ENCODE measurements at regions of chr1 and their contacts with region 1.

Region 1: DNA sequence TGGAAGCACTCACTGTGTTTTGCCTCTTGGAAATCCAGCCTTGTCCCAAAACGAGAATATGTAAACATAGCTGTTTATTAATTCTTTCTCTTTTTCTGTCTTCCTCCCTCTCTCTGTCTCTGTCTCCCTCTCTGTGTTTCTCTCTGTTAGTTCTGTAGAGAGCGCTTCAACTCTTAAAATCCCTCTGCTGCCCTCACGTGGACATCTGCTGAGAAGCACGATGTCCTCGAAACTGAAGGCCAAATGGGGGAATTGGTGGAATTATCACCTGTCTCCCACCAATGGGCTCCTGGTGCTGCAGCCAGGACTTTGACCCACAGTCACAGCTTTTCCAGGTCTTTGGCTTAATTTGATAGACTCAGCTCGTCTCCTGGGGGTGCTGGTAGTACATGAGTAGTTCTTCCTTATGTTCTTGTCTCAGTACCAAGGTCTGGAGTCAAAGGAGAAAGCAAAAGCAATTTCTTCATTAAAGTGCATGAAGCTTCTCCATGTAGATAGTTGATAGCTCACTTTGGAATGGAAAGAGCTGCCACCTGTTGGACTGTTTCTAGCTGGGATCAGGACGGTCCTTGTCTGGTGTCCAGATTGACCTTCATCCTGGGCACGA is 5.5 kb upstream of the GBP6 start:
- DNase-seq: peak; percentile 63 to 65
- H3K4me3 ChIP-seq: no peak overlapping the region
- H3K27ac ChIP-seq: no peak overlapping the region
- H3K4me1 ChIP-seq: 0 out of 2 replicates have a peak, but pooled peaks cover 6% of the 10 kb centered on the region
- H3K27me3 ChIP-seq: no peaks in the 10 kb centered on the region
- CTCF ChIP-seq: peak; percentile 89

Region 2: DNA sequence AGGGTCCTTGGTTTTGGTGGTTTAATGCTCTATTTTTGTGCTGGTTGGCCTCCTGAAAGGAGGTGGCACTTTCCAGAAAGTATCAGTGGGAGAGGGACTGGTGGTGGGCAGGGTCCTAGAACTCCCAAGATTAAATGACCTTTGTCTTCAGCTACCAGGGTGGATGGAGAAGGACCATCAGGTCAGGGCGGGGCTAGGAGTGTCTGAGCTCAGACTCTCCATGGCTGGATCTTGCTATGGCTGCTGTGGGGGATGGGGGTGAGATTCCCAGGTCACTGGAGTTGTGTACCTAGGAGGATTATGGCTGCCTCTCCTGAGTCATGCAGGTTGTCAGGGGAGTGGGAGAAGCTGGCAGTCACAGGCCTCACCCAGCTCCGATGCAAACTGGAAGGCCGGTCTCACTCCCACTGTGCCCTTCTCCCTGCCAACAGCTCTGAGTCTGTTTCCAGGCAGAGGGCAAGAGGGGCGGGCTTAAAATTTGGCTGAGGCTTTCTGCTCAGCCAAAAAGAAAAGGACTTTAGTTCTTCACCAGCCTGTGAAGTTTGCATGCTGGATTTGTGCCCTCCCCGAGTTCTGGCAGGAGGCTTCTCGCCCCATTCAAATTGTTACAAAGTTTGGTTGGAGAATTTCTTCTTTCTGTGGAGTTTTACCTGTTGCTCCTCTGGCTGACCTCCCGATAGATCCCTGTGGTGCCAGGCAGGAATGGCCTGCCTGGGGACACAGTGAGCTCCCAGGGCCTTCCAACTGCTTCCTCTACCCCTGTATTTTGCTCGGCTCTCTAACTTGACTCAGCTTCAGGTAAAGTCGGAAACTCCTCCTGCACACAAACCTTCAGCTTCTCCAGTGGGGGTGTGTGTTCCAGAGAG is 352.9 kb before region 1 on chr1:
- CTCF ChIA-PET with region 1: no interaction called
- POLR2A ChIA-PET with region 1: no interaction called
- intact Hi-C with region 1: no loop called
- DNase-seq: peak in 1 of 2 experiments; percentile 30
- H3K4me3 ChIP-seq: no peak overlapping the region
- H3K27ac ChIP-seq: no peak overlapping the region
- H3K4me1 ChIP-seq: no peaks in the 10 kb centered on the region; the same call in 1 of the 2 replicates
- H3K27me3 ChIP-seq: no peaks in the 10 kb centered on the region
- CTCF ChIP-seq: no peak

Region 3: DNA sequence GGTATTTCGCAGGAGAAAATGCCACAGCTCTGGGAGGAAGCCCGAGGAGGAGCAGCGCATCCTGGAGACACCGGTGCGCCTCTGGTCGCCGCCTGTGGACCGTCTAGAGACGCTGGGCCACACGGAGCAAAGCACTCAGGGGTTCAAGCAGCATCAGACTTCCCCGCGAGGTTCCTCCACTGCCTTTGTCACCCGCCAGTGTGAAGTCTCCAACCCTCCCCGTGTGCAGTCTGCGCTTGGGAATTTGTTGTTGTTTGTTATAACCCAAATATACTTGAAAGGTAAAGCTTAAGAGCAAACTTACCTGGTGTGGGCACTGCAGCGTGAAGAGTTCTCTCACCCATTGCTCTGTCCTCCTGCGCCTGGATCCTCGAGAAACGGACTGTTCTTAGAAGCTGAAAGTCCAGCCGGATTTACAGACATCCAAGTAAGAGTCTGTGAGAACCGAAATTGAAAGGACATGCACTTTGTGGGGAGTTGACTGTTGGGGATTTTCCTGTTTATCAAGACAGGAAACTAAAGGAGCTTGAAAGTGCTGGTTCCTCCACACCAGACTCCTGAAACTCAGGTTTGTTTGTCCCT is 159.8 kb before region 1 on chr1 and contains the start of gene GBP4:
- CTCF ChIA-PET with region 1: no interaction called
- POLR2A ChIA-PET with region 1: no interaction called
- intact Hi-C with region 1: loop called (anchors 10 kb)
- DNase-seq: peak in 1 of 2 experiments; percentile 10
- H3K4me3 ChIP-seq: no peak within 1 kb of the TSS
- H3K27ac ChIP-seq: no peak within 1 kb of the TSS
- H3K4me1 ChIP-seq: no peaks in the 10 kb centered on the region
- H3K27me3 ChIP-seq: no peaks in the 10 kb centered on the region
- CTCF ChIP-seq: no peak
- total RNA-seq, gene GBP4: 0.83 and 1.3 TPM in 2 replicates

Region 4: DNA sequence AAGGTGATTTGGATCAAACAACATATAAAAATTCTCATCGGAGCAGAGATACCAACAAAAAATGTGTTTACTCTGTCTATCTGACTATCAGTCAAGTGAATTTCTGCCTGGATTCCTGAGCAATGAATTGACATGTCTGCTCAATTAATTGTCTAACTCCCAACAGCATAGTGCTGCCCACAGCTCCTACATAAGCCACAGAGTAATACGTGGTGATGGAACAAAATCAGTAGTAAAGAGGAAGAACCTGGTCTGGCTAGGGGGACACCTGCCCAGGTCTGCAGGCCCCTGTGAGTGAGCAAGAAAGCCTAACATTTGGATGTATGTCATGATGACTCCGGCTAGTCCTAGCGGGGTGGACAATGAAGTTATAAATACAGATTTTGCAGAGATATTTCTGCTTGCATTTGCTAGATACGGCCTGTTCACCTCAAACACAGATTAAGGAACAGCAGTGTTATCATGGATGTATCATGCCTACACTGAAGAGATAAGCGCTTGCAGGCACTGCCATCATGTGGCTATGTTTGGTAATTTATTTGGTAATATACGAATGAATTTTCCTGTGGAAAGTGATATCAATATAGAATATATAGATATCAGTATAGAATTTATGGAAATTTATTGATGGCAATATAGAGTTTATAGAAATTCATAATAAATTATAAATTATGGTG is 96.6 kb after region 1 on chr1:
- CTCF ChIA-PET with region 1: no interaction called
- POLR2A ChIA-PET with region 1: no interaction called
- intact Hi-C with region 1: loop called (anchors 2 kb)
- DNase-seq: peak; percentile 36 to 56
- H3K4me3 ChIP-seq: no peak overlapping the region
- H3K27ac ChIP-seq: no peak overlapping the region
- H3K4me1 ChIP-seq: 0 out of 2 replicates have a peak, but pooled peaks cover 3% of the 10 kb centered on the region
- H3K27me3 ChIP-seq: no peaks in the 10 kb centered on the region
- CTCF ChIP-seq: peak; percentile 94